ENCODE measurements at regions of chr2 and their contacts with region 1.

Region 1: DNA sequence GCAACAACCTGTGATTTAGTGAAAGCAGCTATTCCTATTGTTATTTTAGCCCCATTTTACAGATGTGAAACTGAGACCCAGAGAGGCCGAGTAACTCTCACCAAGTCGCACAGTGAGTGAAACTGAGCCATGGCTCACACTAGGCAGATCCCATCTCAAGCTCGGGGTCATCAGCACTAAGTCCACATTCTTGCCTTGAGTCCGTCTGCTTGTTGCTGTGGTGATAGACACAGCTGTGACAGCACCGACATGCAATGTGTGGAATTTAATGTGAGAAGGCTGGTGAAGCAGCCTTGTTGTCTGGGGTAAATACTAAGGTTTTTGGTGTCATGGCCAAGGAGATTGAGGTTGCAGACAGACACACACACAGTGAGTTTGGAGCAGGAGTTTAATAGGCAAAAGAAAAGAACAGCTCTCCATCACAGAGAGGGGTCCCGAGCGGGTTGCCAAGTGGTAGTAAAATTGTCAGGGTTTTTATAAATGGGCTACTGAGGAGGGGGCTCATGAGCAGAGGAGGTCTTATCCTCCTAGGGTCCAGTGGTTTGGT is 40.2 kb upstream of the GMCL1 start:
- DNase-seq: no peak
- ATAC-seq: peak; percentile 92
- H3K4me3 ChIP-seq: peak overlapping the region; percentile 54
- H3K27ac ChIP-seq: peak overlapping the region; percentile 92
- H3K4me1 ChIP-seq: peaks cover 32% of the 10 kb centered on the region
- H3K27me3 ChIP-seq: no peaks in the 10 kb centered on the region
- CTCF ChIP-seq: no peak
- EP300 ChIP-seq: peak in 1 of 2 experiments; percentile 42; a peak in 1 of 4 replicates
- POLR2A ChIP-seq: peak; percentile 61; the same call in 1 of the 2 replicates
- RAD21 ChIP-seq: no peak

Region 2: DNA sequence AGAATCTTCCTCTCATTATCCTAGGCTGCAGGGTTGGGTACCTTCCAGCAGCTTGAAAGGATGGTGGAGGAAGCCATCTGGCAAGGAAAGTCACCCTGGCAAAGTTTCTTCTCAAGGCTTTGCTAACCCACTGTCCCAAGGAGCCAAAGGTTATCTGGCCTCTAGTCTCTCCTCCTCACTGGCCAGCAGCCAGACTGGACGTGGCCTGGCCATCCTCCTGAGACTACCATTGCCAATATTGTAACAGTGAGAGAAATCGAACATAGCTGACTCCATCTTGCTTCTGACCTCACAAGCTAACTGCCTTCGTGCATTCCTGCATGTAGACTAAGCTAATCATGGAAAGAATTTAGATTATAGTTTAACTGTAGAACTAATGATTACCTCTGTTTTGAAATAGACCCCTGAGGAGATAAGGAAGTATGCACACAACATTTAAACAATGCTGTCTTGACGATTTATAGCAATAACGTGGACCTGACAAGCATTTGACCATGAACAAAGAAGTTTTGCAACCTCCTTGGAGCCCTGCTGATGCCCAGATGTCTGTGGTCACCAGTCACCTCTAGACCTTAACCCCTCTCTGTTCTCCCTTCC is 55.1 kb before region 1 on chr2:
- CTCF ChIA-PET with region 1: interaction called, 5 read pairs
- POLR2A ChIA-PET with region 1: interaction called, 5 read pairs
- RAD21 ChIA-PET with region 1: interaction called, 9 read pairs
- SMC1A ChIA-PET with region 1: interaction called, 19 read pairs
- in situ Hi-C with region 1: no loop called
- intact Hi-C with region 1: no loop called
- DNase-seq: no peak
- ATAC-seq: no peak
- H3K4me3 ChIP-seq: no peak overlapping the region
- H3K27ac ChIP-seq: no peak overlapping the region
- H3K4me1 ChIP-seq: peaks cover 20% of the 10 kb centered on the region
- H3K27me3 ChIP-seq: no peaks in the 10 kb centered on the region
- CTCF ChIP-seq: no peak
- EP300 ChIP-seq: no peak
- POLR2A ChIP-seq: no peak
- RAD21 ChIP-seq: no peak

Region 3: DNA sequence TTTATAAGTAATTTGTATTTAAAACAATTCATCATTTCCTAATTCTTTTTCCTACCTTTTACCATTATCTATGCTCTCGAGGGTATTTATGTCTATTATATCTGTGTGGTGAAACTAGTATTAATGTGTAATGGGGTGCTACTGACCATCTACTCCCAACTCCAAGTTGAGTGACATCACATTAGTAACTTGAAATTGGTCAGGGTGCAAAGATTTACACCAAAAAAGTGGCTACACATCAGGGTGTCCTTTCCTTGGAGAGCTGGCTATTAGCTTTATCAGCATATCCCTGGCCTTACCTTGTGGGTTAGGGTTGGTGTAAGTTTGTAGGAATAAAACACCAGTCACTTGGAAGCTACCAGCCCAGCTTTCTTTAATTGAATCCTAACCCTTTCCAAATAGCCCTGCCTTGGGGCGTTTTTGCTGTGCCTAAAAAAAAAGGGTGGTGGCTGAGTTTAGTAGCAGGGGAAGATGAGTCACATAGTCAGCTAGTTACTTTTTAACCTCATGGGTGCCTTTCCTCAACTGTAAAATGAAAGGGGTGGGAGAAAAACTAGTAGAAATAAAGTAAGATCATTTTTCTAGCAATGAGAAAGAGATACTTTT is 33.3 kb before region 1 on chr2:
- CTCF ChIA-PET with region 1: interaction called, 13 read pairs
- POLR2A ChIA-PET with region 1: interaction called, 7 read pairs
- RAD21 ChIA-PET with region 1: interaction called, 19 read pairs
- SMC1A ChIA-PET with region 1: interaction called, 24 read pairs
- in situ Hi-C with region 1: no loop called
- intact Hi-C with region 1: no loop called
- DNase-seq: no peak
- ATAC-seq: peak; percentile 90
- H3K4me3 ChIP-seq: no peak overlapping the region
- H3K27ac ChIP-seq: no peak overlapping the region
- H3K4me1 ChIP-seq: peaks cover 7% of the 10 kb centered on the region
- H3K27me3 ChIP-seq: no peaks in the 10 kb centered on the region
- CTCF ChIP-seq: no peak
- EP300 ChIP-seq: no peak
- POLR2A ChIP-seq: no peak
- RAD21 ChIP-seq: no peak

Region 4: DNA sequence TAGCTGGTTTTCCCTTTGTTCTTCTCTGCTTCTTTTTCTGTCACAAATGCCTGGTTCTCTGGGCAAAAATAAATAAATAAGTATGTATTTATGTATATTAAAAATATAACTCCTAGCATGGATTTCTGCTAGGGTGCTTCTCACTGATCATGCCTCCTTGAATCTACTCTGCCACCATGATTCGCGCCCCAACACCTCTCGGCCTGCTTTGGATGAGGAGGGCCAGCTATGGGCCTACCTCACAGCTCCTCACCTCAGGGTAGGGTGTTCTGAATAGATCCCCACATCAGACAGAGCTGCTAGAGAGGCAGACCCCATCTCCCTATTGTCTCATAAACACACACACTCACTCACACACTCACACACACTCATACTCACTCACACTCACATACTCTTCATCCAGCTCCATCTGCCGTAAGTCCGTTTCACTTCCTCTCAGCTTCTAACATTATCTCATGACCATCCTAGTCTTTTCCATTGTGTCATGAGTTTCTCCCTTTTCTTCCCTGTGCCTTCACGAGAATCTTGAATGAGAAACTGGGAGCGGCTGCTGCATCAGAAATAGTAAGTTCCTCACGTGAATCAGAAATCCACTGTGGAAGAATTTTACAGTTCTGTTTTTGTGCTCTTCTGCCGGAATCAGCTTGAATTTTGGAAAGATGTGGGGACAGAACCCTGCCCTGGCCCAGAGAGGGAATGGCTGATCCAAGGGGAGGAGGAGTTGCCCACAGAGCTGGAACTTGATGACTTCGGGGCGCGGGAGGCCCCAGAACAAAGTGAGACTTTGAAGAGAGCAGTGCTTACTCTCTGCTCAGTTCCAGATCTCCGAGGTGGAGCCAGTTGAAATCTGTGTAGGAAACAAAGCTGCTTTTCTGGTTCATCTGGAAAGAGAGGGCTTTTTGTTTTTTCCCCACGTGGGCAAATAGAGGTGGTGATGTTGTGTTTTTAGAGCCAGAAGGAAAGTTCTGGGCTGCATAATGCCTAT is 26.4 kb before region 1 on chr2:
- CTCF ChIA-PET with region 1: interaction called, 17 read pairs
- POLR2A ChIA-PET with region 1: interaction called, 5 read pairs
- RAD21 ChIA-PET with region 1: interaction called, 22 read pairs
- SMC1A ChIA-PET with region 1: interaction called, 40 read pairs
- in situ Hi-C with region 1: no loop called
- intact Hi-C with region 1: no loop called
- DNase-seq: no peak
- ATAC-seq: peak; percentile 46
- H3K4me3 ChIP-seq: no peak overlapping the region
- H3K27ac ChIP-seq: peak overlapping the region; percentile 9; the same call in 1 of the 2 replicates
- H3K4me1 ChIP-seq: peaks cover 44% of the 10 kb centered on the region
- H3K27me3 ChIP-seq: no peaks in the 10 kb centered on the region
- CTCF ChIP-seq: no peak
- EP300 ChIP-seq: no peak
- POLR2A ChIP-seq: no peak
- RAD21 ChIP-seq: no peak

Region 5: DNA sequence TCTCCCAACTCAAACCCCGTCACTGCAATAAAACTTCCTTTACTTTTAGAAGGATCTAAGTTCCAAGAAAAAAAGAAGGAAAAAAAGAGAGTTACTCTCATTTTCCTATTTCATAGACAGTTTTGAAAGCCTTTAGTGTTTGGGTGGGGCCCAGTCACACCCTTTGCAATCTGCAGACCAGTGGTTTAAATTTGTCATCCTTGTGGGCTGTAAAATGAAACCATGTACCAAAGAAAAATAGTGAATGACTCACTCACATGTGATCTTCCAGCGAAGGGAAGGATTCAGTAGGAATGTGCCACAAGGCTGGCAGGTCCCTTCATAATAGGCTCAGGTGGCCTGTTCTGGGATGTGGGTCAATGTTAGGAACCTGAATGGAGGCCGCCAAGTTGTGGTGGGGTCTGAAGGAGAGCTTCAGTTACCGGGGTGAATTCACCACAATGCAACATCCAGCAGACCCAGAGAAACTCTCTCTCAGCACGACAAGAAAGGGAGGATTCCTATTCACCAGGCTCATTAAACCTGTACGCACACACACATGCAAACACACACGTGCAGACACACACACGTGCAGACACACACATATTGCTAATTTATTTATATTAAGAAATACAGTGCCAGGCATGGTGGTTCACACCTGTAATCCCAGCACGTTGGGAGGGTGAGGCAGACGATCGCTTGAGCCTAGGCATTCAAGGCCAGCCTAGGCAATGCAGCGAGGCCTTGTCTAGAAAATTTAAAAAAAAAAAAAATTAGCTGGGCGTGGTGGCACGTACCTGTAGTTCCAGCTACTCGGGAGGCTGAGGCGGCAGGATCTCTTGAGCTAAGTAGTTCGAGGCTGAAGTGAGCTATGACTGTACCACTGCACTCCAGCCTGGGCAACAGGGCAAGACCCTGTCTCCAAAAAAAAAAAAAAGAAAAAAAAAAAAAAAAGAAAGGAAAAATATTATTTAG is 18.8 kb before region 1 on chr2:
- CTCF ChIA-PET with region 1: interaction called, 24 read pairs
- POLR2A ChIA-PET with region 1: interaction called, 29 read pairs
- RAD21 ChIA-PET with region 1: interaction called, 29 read pairs
- SMC1A ChIA-PET with region 1: interaction called, 94 read pairs
- in situ Hi-C with region 1: no loop called
- intact Hi-C with region 1: no loop called
- DNase-seq: no peak
- ATAC-seq: peak; percentile 62
- H3K4me3 ChIP-seq: no peak overlapping the region
- H3K27ac ChIP-seq: no peak overlapping the region
- H3K4me1 ChIP-seq: peaks cover 60% of the 10 kb centered on the region
- H3K27me3 ChIP-seq: no peaks in the 10 kb centered on the region
- CTCF ChIP-seq: no peak
- EP300 ChIP-seq: no peak
- POLR2A ChIP-seq: no peak
- RAD21 ChIP-seq: no peak

Region 6: DNA sequence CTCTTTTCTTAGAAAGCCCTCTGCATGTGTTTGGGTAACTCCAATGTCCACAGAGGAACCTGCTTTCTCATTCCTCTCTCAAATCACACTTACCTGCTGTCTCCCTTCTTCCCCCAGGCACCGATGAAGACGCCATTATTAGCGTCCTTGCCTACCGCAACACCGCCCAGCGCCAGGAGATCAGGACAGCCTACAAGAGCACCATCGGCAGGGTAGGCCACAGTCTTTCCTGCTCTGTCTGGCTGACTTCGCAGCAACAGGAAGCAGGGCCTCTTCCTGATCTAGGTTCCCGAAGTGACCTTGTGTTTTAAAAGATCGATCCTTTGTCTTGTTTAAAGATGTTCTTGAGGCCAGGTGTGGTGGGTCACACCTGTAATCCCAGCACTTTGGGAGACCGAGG is 15.2 kb after region 1 on chr2:
- CTCF ChIA-PET with region 1: interaction called, 24 read pairs
- POLR2A ChIA-PET with region 1: interaction called, 40 read pairs
- RAD21 ChIA-PET with region 1: interaction called, 88 read pairs
- SMC1A ChIA-PET with region 1: interaction called, 54 read pairs
- in situ Hi-C with region 1: no loop called
- intact Hi-C with region 1: no loop called
- DNase-seq: no peak
- ATAC-seq: no peak
- H3K4me3 ChIP-seq: no peak overlapping the region
- H3K27ac ChIP-seq: peak overlapping the region; percentile 0; the same call in 1 of the 2 replicates
- H3K4me1 ChIP-seq: peaks cover 47% of the 10 kb centered on the region
- H3K27me3 ChIP-seq: no peaks in the 10 kb centered on the region
- CTCF ChIP-seq: no peak
- EP300 ChIP-seq: no peak
- POLR2A ChIP-seq: no peak
- RAD21 ChIP-seq: no peak